ENCODE measurements at regions of chr6 and their contacts with region 1.

Region 1: DNA sequence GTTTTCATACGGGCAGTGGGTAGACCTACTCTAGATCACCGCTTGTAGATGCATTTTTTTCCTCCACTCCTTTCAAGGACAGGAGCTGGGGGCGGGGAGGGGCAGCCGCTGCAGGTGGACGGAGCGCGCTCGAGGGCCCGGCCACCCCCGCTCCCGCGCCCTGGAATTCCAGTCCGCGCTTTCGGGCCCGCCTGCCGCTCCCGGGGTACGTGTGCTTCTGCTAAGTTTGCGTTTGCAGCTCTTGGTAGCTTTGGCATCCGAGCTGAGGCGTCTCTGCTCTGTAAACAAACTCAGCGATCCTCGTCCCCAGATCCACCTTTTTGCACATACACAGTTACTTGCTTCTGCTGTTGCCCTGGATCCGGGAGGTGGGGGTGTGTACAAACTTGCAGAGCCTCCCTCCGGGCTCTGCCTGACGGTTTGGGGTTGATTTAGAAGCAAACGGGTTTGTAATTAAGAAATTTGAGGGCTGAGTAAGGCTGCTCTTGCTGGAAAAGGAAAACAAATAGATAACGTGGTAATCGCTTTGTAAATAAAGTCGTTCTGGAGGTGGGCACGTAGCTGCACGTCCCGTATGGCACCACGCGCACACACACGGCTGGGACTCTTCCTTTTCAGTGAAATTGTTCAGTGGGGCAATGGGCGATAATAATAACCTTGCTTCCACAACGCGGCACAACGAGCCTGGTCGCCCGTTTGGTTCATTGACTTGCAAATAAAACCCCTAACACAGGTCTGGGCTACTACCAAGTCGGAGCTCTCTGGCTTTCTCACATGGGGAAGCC is 976 bp upstream of the CITED2 start:
- DNase-seq: peak; percentile 96
- H3K4me3 Mint-ChIP-seq: peak overlapping the region; percentile 99
- H3K27ac Mint-ChIP-seq: peak overlapping the region; percentile 98
- H3K4me1 Mint-ChIP-seq: peaks cover 32% of the 10 kb centered on the region
- H3K27me3 Mint-ChIP-seq: no peaks in the 10 kb centered on the region

Region 2: DNA sequence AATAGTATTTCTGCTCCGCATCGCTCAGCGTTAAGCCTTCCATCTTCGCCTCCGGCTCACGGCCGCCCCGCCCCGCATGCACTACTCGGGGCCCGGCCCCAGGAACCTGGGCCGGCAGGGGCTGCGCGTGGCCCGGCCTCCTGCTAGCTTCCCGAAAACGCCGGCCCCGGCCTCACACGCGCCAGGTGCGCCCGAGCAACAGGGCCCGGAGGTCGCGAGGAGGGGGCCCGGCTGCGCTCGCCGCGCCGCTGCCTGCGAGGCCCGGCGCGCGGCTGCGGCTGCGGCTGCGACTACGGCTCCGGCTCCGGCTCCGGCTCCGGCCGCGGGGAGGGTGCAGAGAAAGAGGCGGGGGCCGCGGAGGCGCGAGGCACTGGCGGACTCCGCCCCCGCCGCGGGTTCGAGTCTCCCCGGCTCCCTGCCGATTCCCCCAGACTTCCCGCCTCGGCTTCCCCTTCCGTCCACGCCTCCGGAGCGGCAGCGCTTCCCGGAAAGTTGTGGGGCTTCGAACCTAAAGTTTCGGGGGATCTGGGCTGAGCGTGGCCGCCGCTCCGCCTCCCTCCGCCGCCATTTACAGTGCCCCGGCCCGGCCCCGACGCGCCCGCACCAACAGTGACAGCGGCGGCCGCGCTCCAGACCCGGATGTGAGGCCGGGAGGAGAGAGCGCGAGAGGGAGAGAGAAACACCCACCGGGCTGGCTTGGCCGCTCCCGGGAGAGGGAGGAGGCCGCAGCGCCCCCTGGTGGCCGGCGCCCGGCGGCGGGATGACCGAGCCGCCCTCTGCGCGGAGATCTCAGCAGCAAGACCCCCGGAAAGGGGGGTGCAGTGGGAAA is 387.6 kb before region 1 on chr6 and contains the start of gene REPS1:
- intact Hi-C with region 1: loop called (anchors 2 kb)
- DNase-seq: peak; percentile 98
- H3K4me3 Mint-ChIP-seq: peak within 1 kb of the TSS; percentile 91
- H3K27ac Mint-ChIP-seq: peak within 1 kb of the TSS; percentile 97
- H3K4me1 Mint-ChIP-seq: peaks cover 19% of the 10 kb centered on the region
- H3K27me3 Mint-ChIP-seq: peaks cover under 1% of the 10 kb centered on the region
- total RNA-seq, gene REPS1: 65.8 and 70.1 TPM in 2 replicates

Region 3: GRCh38 chr6:139443231-139444130 is 68.1 kb after region 1 on chr6:
- intact Hi-C with region 1: loop called (anchors 5 kb)
- DNase-seq: no peak
- H3K4me3 Mint-ChIP-seq: no peak overlapping the region
- H3K27ac Mint-ChIP-seq: no peak overlapping the region
- H3K4me1 Mint-ChIP-seq: peaks cover 33% of the 10 kb centered on the region
- H3K27me3 Mint-ChIP-seq: peaks cover 5% of the 10 kb centered on the region

Region 4: DNA sequence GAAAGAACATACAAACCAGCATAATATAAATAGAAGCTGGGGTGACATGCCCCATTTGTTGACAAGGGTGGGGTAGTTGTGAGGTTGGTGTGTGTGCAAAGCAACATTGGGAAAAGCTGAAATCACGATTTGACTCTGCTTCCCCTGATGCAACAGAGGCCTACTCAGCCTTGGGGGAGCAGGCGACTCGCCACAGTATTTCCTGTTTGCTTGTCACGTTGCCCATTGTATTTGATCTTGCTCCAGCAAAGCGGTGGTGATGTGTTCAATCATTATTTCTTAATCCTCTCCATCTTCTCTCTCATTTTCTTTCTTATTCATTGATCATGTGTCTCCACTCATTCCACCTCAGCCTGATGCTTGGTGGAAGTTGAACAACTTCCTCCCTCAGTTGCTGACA is 164.9 kb after region 1 on chr6:
- intact Hi-C with region 1: loop called (anchors 1 kb)
- DNase-seq: peak; percentile 87
- H3K4me3 Mint-ChIP-seq: peak overlapping the region; percentile 57
- H3K27ac Mint-ChIP-seq: peak overlapping the region; percentile 83
- H3K4me1 Mint-ChIP-seq: peaks cover 47% of the 10 kb centered on the region
- H3K27me3 Mint-ChIP-seq: no peaks in the 10 kb centered on the region

Region 5: DNA sequence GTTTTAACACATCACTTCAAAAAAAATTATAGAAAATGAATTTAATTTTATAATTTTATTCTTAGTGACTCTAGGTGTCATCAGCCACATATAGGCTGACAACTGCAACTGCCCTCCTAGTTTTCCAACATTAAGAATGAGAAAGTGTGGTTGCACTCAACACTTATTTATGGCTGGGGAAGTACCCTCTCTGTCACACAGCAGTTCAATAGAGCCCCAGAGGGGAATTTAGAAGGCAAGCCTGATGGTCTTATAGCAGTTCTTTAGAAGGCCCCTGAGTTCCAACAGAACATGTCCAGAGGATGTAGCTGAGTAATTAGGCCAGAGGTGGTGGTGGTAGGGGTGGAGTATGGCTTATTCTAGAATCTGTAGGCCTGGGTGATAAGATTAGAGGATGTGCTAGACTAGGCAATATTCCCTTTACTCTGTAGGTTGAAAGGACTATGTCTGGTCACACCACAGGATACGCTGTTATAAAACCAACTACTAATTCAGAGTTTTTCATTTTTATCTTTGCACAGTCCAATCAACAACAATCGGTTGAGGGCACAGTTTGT is 225.6 kb after region 1 on chr6:
- intact Hi-C with region 1: loop called (anchors 5 kb)
- DNase-seq: no peak
- H3K4me3 Mint-ChIP-seq: no peak overlapping the region
- H3K27ac Mint-ChIP-seq: peak overlapping the region; percentile 75
- H3K4me1 Mint-ChIP-seq: peaks cover 6% of the 10 kb centered on the region
- H3K27me3 Mint-ChIP-seq: no peaks in the 10 kb centered on the region

Region 6: GRCh38 chr6:139764498-139764986 is 389.1 kb after region 1 on chr6:
- intact Hi-C with region 1: loop called (anchors 5 kb)
- DNase-seq: no peak
- H3K4me3 Mint-ChIP-seq: no peak overlapping the region
- H3K27ac Mint-ChIP-seq: peak overlapping the region; percentile 54
- H3K4me1 Mint-ChIP-seq: peaks cover 18% of the 10 kb centered on the region
- H3K27me3 Mint-ChIP-seq: peaks cover 2% of the 10 kb centered on the region

Region 7: GRCh38 chr6:139895205-139895793 is 519.9 kb after region 1 on chr6:
- intact Hi-C with region 1: loop called (anchors 10 kb)
- DNase-seq: no peak
- H3K4me3 Mint-ChIP-seq: no peak overlapping the region
- H3K27ac Mint-ChIP-seq: no peak overlapping the region
- H3K4me1 Mint-ChIP-seq: no peaks in the 10 kb centered on the region
- H3K27me3 Mint-ChIP-seq: peaks cover 10% of the 10 kb centered on the region

Measured in activated CD4-positive, alpha-beta T cell treated with anti-CD3 and anti-CD28 coated beads, Interleukin-2, amount 10 ng/mL, durations not matched to agents 24 days and 14 days (primary cell).